ENCODE measurements at regions of chr2 and their contacts with region 1.

Region 1: GRCh38 chr2:88627056-88627855 is at the start of gene EIF2AK3:
- DNase-seq: peak; percentile 90
- ATAC-seq: peak; percentile 90
- H3K4me3 Mint-ChIP-seq: peak within 1 kb of the TSS; percentile 94
- H3K27ac Mint-ChIP-seq: peak within 1 kb of the TSS; percentile 86
- H3K4me1 Mint-ChIP-seq: peaks cover 16% of the 10 kb centered on the region
- H3K27me3 Mint-ChIP-seq: peaks cover 5% of the 10 kb centered on the region
- total RNA-seq, gene EIF2AK3: 18.4 to 19.5 TPM

Region 2: DNA sequence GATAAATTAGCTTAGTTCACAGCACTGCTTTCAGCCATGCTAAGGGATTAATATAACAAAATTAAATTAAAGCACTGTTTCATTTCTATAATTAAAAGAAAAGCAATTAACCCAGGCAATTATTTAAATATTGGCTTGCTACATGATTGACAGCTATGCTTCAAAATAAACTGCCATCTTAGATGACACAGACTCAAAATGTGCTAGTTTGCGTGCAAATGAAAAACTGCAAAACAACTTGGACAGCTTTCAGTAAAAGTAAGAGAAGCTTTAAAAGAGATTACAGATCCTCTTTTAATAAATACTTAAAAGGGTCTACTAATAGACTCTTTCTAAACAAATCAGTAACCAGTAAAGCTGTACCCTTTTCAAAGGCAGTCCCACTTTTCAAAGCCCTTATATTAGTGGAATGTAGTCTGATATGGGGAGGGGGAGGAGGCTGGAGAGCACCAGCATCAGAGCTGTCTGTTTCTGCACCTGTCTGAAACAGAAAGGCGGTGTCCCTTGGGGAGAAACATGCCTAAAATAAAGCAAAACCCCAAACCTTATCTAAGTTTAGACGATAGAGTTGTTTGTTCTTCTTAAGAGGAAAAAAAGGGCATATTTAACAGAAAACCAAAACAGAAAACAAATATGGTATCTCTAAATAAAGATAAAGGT is 20.8 kb before region 1 on chr2:
- POLR2A ChIA-PET with region 1: no interaction called
- DNase-seq: no peak
- ATAC-seq: no peak
- H3K4me3 Mint-ChIP-seq: no peak overlapping the region
- H3K27ac Mint-ChIP-seq: no peak overlapping the region
- H3K4me1 Mint-ChIP-seq: peaks cover 9% of the 10 kb centered on the region
- H3K27me3 Mint-ChIP-seq: no peaks in the 10 kb centered on the region

Region 3: DNA sequence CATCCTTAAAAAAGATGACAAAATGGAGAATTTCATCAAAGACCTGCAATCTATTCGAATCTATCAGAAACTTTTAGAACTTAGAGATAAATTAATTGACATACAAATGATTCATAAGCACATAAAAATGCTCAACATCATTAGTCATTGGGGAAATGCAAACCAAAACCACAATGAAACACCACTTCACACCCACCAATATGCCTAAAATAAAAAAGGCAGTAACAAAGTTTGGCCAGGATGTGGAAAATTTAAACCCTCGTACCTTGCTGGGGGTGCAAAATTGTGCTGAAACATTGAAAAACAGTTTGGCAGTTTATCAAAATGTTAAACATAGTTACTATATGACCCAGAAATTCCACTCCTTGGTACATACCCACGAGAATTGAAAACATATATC is 11.5 kb after region 1 on chr2:
- POLR2A ChIA-PET with region 1: interaction called, 11 read pairs
- DNase-seq: no peak
- ATAC-seq: peak; percentile 73
- H3K4me3 Mint-ChIP-seq: peak overlapping the region; percentile 5
- H3K27ac Mint-ChIP-seq: no peak overlapping the region
- H3K4me1 Mint-ChIP-seq: peaks cover 23% of the 10 kb centered on the region
- H3K27me3 Mint-ChIP-seq: peaks cover 16% of the 10 kb centered on the region

Region 4: GRCh38 chr2:88654714-88655113 is 27.5 kb after region 1 on chr2:
- POLR2A ChIA-PET with region 1: no interaction called
- DNase-seq: no peak
- ATAC-seq: no peak
- H3K4me3 Mint-ChIP-seq: no peak overlapping the region
- H3K27ac Mint-ChIP-seq: no peak overlapping the region
- H3K4me1 Mint-ChIP-seq: peaks cover 4% of the 10 kb centered on the region
- H3K27me3 Mint-ChIP-seq: peaks cover 8% of the 10 kb centered on the region

Region 5: DNA sequence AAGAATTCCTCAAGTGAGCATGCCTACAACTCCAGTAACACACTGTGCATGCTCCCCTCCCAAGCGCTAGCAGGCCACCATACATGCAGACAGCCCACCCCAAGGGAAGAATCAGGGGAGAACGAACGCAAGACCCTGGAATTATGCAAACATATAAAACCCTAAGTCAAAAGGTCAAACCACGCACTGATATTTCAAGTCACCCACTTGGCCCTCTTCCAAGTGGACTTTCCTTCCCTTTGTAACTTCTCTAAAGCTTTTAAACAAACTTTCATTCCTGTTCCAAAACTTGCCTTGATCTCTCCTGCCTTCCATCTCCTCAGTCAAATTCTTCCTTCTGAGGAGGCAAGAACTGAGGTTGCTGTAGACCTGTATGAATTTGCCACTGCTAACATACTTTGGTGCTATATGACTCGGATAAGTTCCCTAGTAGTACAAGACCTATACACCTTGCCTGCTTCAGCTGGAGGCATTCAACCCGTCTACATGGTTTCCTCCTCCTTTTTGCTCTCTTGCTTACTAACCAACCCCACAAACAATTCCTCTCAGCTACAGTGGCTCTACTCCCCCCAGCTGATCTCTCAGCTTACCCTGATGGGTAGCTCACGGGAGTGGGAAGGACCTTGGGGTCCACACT is 53.1 kb after region 1 on chr2:
- POLR2A ChIA-PET with region 1: no interaction called
- DNase-seq: no peak
- ATAC-seq: no peak
- H3K4me3 Mint-ChIP-seq: no peak overlapping the region
- H3K27ac Mint-ChIP-seq: no peak overlapping the region
- H3K4me1 Mint-ChIP-seq: no peaks in the 10 kb centered on the region
- H3K27me3 Mint-ChIP-seq: peaks cover 4% of the 10 kb centered on the region

Measured in activated naive CD8-positive, alpha-beta T cell treated with anti-CD3 and anti-CD28 coated beads, Interleukin-2, amount 10 ng/mL, durations not matched to agents 7 days and 5 days (primary cell).